T-cell (primary cell): ENCODE measurements at regions of chr9 and their contacts with region 1.

Region 1: GRCh38 chr9:70602321-70603019 is 188.0 kb upstream of the KLF9 start:
- DNase-seq: peak in 30 of 35 experiments; percentile 4 to 74 (median 25)
- ATAC-seq: peak in 3 of 4 experiments; percentile 60 to 80 (median 78)
- H3K4me3 ChIP-seq: no peak overlapping the region
- H3K4me3 Mint-ChIP-seq: no peak overlapping the region
- H3K27ac ChIP-seq: no peak overlapping the region
- H3K27ac Mint-ChIP-seq: no peak overlapping the region
- H3K4me1 ChIP-seq: peaks cover 0 to 3% of the 10 kb centered on the region in 2 experiments
- H3K4me1 Mint-ChIP-seq: peaks cover 0 to 2% (median 0%) of the 10 kb centered on the region in 3 donors
- H3K27me3 ChIP-seq: no peaks in the 10 kb centered on the region
- H3K27me3 Mint-ChIP-seq: no peaks in the 10 kb centered on the region

Region 2: GRCh38 chr9:69740872-69741505 is 861.5 kb before region 1 on chr9:
- CTCF ChIA-PET with region 1: no interaction called
- POLR2A ChIA-PET with region 1: no interaction called
- DNase-seq: no peak
- ATAC-seq: no peak
- H3K4me3 ChIP-seq: no peak overlapping the region
- H3K4me3 Mint-ChIP-seq: no peak overlapping the region
- H3K27ac ChIP-seq: no peak overlapping the region
- H3K27ac Mint-ChIP-seq: no peak overlapping the region
- H3K4me1 ChIP-seq: peaks cover 0 to 10% of the 10 kb centered on the region in 2 experiments
- H3K4me1 Mint-ChIP-seq: peaks cover 23 to 29% (median 25%) of the 10 kb centered on the region in 3 donors
- H3K27me3 ChIP-seq: no peaks in the 10 kb centered on the region
- H3K27me3 Mint-ChIP-seq: no peaks in the 10 kb centered on the region

Region 3: GRCh38 chr9:70340572-70340971 is 261.9 kb before region 1 on chr9:
- CTCF ChIA-PET with region 1: interaction called, 16 to 54 read pairs
- POLR2A ChIA-PET with region 1: no interaction called
- DNase-seq: peak in 1 of 35 experiments; percentile 45
- ATAC-seq: no peak
- H3K4me3 ChIP-seq: no peak overlapping the region
- H3K4me3 Mint-ChIP-seq: no peak overlapping the region
- H3K27ac ChIP-seq: no peak overlapping the region
- H3K27ac Mint-ChIP-seq: no peak overlapping the region
- H3K4me1 ChIP-seq: no peaks in the 10 kb centered on the region
- H3K4me1 Mint-ChIP-seq: peaks cover 0 to 2% (median 0%) of the 10 kb centered on the region in 3 donors
- H3K27me3 ChIP-seq: no peaks in the 10 kb centered on the region
- H3K27me3 Mint-ChIP-seq: no peaks in the 10 kb centered on the region

Region 4: DNA sequence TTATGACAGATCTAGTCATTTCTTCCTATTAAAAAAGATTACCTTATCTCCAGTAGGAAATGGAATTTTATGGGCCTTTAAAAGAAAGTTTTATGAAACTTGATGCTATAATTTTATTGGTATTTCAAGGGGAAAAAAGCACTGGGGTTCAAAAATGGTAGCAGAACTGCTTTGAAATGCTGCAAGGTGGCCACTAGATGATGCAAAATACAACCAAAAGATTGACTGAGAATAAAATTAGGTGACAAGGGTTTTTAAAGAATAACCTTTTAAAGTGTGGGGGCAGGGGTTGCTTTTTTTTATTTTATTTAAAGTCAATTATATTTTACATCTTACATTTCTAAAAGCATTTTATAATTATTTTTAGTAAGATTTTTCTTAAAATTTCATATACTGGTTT is 249.7 kb before region 1 on chr9:
- CTCF ChIA-PET with region 1: interaction called, 4 to 20 read pairs
- POLR2A ChIA-PET with region 1: no interaction called
- DNase-seq: peak in 1 of 35 experiments; percentile 47
- ATAC-seq: peak in 1 of 4 experiments; percentile 38
- H3K4me3 ChIP-seq: no peak overlapping the region
- H3K4me3 Mint-ChIP-seq: no peak overlapping the region
- H3K27ac ChIP-seq: no peak overlapping the region
- H3K27ac Mint-ChIP-seq: peak overlapping the region in 1 of 2 donors; percentile 36
- H3K4me1 ChIP-seq: no peaks in the 10 kb centered on the region
- H3K4me1 Mint-ChIP-seq: peaks cover 0 to 2% (median 0%) of the 10 kb centered on the region in 3 donors
- H3K27me3 ChIP-seq: no peaks in the 10 kb centered on the region
- H3K27me3 Mint-ChIP-seq: no peaks in the 10 kb centered on the region

Region 5: DNA sequence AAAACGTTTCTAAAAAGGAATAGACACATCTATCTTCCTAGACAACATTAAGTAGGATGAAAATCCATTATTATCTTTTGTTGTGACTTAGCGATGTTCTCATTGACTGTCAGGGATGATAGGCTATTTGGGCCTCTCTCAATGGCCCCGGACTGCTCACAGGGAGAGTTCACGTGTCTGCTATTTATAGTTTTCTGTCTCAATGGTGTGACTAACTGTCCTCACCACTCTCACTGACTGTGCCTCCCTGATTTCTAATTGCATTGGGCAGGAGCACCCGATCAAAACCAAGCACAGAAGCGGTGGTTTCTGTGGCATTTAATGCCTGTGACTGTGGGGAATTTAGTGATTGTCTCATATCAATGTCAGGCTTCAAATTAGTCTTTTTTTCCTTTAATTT is 98.7 kb after region 1 on chr9:
- CTCF ChIA-PET with region 1: no interaction called
- POLR2A ChIA-PET with region 1: no interaction called
- DNase-seq: no peak
- ATAC-seq: no peak
- H3K4me3 ChIP-seq: no peak overlapping the region
- H3K4me3 Mint-ChIP-seq: no peak overlapping the region
- H3K27ac ChIP-seq: no peak overlapping the region
- H3K27ac Mint-ChIP-seq: no peak overlapping the region
- H3K4me1 ChIP-seq: no peaks in the 10 kb centered on the region
- H3K4me1 Mint-ChIP-seq: no peaks in the 10 kb centered on the region
- H3K27me3 ChIP-seq: peaks cover 0 to 4% of the 10 kb centered on the region in 2 experiments
- H3K27me3 Mint-ChIP-seq: no peaks in the 10 kb centered on the region